CD4-positive, alpha-beta T cell (primary cell): ENCODE measurements at regions of chr1 and their contacts with region 1.

Region 1: GRCh38 chr1:11907275-11908094 is 18.7 kb downstream of the KIAA2013 start:
- DNase-seq: peak; percentile 80 to 97 (median 88)
- ATAC-seq: peak; percentile 67
- H3K4me3 ChIP-seq: peak overlapping the region; percentile 90
- H3K4me3 Mint-ChIP-seq: peak overlapping the region; percentile 91
- H3K27ac ChIP-seq: peak overlapping the region; percentile 86 to 97
- H3K27ac Mint-ChIP-seq: peak overlapping the region; percentile 100
- H3K4me1 ChIP-seq: peaks cover 36% of the 10 kb centered on the region
- H3K4me1 Mint-ChIP-seq: peaks cover 41% of the 10 kb centered on the region
- H3K27me3 ChIP-seq: peaks cover 6% of the 10 kb centered on the region in 2 experiments
- H3K27me3 Mint-ChIP-seq: peaks cover 20% of the 10 kb centered on the region
- CTCF ChIP-seq: peak; percentile 81

Region 2: DNA sequence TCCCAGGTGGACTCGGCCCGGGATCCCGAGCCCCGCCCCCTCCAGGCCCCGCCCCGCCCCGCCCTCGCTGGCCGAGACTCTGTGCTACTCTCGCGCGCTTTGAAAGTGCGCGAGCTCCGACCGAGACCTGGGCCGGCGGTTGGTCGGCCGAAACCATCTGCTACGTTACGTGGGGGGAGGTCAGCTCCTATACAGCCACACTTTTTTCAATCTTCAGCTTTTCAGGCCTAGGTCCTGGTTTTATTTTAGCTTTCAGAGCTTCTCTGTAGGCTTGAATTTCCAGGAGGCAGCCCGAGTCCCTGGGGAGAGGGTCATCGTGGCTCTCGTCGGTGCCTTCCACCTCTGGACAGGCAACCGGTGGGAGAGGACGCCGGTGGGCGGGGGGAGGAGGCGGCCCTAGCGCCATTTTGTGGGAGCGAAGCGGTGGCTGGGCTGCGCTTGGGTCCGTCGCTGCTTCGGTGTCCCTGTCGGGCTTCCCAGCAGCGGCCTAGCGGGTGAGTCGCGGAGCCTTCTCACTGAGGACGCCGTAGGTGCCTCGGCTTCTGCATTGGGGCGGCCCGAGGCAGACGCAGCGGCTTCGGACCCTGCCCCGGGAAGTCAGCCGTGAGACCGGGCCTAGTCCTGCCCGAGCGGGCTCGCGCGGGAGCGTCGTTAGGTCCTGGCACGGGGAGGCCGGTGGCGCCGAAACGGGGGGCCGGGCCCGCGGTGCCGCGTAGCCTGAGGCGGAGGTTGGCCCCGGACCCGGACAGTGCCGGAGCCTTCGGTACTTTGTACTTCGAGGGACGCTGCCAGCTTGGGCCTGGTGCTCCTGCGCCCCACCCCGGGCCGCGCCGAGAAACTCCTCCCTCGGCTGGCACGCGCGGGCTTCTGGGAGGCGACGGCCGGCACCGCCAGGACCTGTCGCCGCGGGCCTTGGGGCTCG is 895.0 kb before region 1 on chr1 and contains the start of gene TARDBP:
- CTCF ChIA-PET with region 1: no interaction called
- POLR2A ChIA-PET with region 1: interaction called, 26 read pairs
- intact Hi-C with region 1: no loop called
- DNase-seq: peak; percentile 80 to 95 (median 88)
- ATAC-seq: peak; percentile 85
- H3K4me3 ChIP-seq: peak within 1 kb of the TSS; percentile 85
- H3K4me3 Mint-ChIP-seq: peak within 1 kb of the TSS; percentile 94
- H3K27ac ChIP-seq: peak within 1 kb of the TSS; percentile 91 to 99
- H3K27ac Mint-ChIP-seq: peak within 1 kb of the TSS; percentile 98
- H3K4me1 ChIP-seq: peaks cover 44% of the 10 kb centered on the region
- H3K4me1 Mint-ChIP-seq: peaks cover 34% of the 10 kb centered on the region
- H3K27me3 ChIP-seq: no peaks in the 10 kb centered on the region
- H3K27me3 Mint-ChIP-seq: no peaks in the 10 kb centered on the region
- CTCF ChIP-seq: no peak
- total RNA-seq, gene TARDBP: 141 to 149 TPM

Region 3: GRCh38 chr1:11661103-11661502 is 246.4 kb before region 1 on chr1:
- CTCF ChIA-PET with region 1: no interaction called
- POLR2A ChIA-PET with region 1: interaction called, 16 read pairs
- intact Hi-C with region 1: no loop called
- DNase-seq: no peak
- ATAC-seq: no peak
- H3K4me3 ChIP-seq: no peak overlapping the region
- H3K4me3 Mint-ChIP-seq: peak overlapping the region; percentile 11
- H3K27ac ChIP-seq: no peak overlapping the region
- H3K27ac Mint-ChIP-seq: no peak overlapping the region
- H3K4me1 ChIP-seq: peaks cover 20% of the 10 kb centered on the region
- H3K4me1 Mint-ChIP-seq: peaks cover under 1% of the 10 kb centered on the region
- H3K27me3 ChIP-seq: no peaks in the 10 kb centered on the region
- H3K27me3 Mint-ChIP-seq: no peaks in the 10 kb centered on the region
- CTCF ChIP-seq: no peak

Region 4: DNA sequence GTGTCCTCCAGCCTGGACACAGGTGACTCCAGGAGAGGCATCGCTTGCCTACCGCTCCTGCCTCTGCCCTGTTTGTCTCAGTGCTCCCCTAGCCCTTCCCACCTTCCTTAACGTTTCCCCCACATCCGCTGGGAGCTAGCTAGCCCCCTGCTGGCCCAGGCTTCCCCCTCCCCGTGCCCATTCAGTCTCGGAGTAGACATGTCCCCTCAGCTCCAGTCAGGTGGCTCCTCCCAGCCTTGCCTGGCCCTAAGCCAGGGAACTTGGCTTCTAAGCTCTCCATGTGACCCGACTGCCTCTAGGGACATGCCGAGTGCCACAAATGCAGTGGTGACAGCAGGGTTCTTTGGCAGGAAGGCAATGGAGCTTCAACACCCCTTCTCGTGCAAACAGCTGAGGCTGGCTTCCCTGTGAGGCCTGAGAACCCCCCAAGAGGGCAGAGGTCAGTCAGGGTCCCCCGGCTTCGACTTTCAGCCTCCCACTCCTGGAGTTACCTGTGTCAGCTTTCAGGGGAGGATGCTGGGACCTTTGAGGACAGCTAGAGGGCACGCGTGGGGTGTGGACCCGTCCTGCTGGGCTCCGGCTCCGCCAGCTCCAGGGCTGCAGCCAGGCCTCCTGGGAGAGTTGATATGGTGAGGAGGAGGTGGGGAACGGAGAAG is 199.7 kb before region 1 on chr1:
- CTCF ChIA-PET with region 1: no interaction called
- POLR2A ChIA-PET with region 1: no interaction called
- intact Hi-C with region 1: no loop called
- DNase-seq: no peak
- ATAC-seq: no peak
- H3K4me3 ChIP-seq: no peak overlapping the region
- H3K4me3 Mint-ChIP-seq: no peak overlapping the region
- H3K27ac ChIP-seq: no peak overlapping the region
- H3K27ac Mint-ChIP-seq: no peak overlapping the region
- H3K4me1 ChIP-seq: no peaks in the 10 kb centered on the region
- H3K4me1 Mint-ChIP-seq: no peaks in the 10 kb centered on the region
- H3K27me3 ChIP-seq: peaks cover 2 to 16% of the 10 kb centered on the region in 2 experiments
- H3K27me3 Mint-ChIP-seq: peaks cover 13% of the 10 kb centered on the region
- CTCF ChIP-seq: no peak

Region 5: DNA sequence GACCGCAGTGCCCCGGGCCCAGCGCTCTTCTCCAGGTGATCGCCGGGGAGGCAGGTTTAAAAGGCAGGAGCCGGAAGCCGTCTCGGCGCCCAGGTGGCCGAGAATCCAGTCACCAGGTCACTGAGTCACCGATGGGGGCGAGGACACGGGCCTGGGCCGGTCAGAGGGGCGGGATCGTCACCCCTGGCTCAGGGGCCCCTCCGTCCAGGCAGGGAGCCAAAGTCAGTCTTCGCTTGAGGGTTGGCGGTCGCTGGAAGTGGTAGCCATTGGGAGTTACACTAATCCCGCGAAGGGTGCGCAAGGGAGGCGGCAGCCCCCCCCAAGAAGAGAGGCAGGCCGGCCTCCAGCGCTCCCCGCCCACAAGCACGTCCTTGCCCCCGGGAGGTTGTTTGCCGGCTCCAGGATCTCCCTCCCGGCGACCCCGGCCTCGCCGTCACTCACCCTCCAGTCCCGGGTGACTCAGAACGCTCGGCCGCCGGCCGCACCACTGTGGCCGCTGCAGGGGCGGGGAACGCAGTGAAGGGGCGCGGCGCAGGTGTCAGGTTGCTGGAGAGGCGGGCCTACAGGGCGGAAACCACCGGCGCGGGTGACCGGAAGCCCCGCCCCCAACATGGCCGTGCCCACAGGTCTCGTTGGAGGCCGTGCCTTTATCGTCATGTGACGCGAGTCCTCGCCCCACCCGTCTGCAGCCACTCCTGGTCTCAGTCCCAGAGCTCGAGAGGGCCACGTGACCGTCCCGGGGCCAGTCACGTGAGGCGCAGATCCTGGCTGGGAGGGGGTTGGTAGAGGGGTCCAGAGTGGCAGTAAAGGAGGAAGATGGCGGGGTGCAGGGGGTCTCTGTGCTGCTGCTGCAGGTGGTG is 101.8 kb before region 1 on chr1 and contains the starts of genes CLCN6 and MTHFR:
- CTCF ChIA-PET with region 1: interaction called, 13 read pairs
- POLR2A ChIA-PET with region 1: interaction called, 84 read pairs
- intact Hi-C with region 1: loop called in 1 of 2 experiments (anchors 2 kb)
- DNase-seq: peak; percentile 93 to 99 (median 97)
- ATAC-seq: peak; percentile 85
- H3K4me3 ChIP-seq: peak within 1 kb of the TSS; percentile 98
- H3K4me3 Mint-ChIP-seq: peak within 1 kb of the TSS; percentile 99
- H3K27ac ChIP-seq: peak within 1 kb of the TSS; percentile 86 to 92
- H3K27ac Mint-ChIP-seq: peak within 1 kb of the TSS; percentile 91
- H3K4me1 ChIP-seq: peaks cover 58% of the 10 kb centered on the region
- H3K4me1 Mint-ChIP-seq: peaks cover 66% of the 10 kb centered on the region
- H3K27me3 ChIP-seq: no peaks in the 10 kb centered on the region
- H3K27me3 Mint-ChIP-seq: no peaks in the 10 kb centered on the region
- CTCF ChIP-seq: no peak
- total RNA-seq, gene CLCN6: 10.9 to 11.2 TPM
- total RNA-seq, gene MTHFR: 30.8 to 31.3 TPM

Region 6: DNA sequence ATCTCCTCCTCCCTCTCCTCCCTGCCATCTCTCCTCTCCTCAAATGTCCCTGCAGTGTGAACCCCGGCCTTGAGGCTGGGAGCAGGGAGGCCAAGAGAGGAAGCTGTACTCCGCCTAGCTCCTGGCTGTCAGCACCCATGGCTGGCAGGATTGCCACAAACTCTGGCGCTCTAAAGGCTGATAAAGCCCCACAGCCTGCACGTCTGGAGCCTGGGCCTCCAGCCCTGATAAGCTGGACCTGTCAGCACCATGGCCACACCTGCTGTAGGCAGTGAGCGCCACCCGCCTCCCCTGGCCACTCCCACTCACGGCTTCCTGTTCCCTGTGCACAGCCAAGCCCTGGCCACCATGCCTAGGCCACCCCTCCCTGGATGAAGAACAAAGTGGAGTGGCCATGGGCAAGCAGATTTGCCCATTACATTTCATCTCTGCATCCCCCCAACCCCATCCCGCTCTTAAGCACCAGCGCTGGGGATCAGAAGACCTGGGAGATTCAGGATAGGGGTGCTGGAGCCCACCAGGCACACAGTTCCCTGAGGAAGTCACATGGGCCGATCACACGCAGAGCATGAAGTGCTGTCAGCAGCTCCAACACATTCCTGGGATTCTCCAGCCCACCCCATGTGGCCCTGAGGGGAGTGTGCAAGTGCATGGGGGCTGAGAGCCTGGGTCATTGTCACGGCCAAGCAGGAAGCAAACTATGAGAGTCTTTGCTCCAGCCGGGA is 24.5 kb before region 1 on chr1:
- CTCF ChIA-PET with region 1: interaction called, 4 read pairs
- POLR2A ChIA-PET with region 1: interaction called, 10 read pairs
- intact Hi-C with region 1: no loop called
- DNase-seq: no peak
- ATAC-seq: no peak
- H3K4me3 ChIP-seq: no peak overlapping the region
- H3K4me3 Mint-ChIP-seq: no peak overlapping the region
- H3K27ac ChIP-seq: no peak overlapping the region
- H3K27ac Mint-ChIP-seq: no peak overlapping the region
- H3K4me1 ChIP-seq: no peaks in the 10 kb centered on the region
- H3K4me1 Mint-ChIP-seq: no peaks in the 10 kb centered on the region
- H3K27me3 ChIP-seq: peaks cover 0 to 2% of the 10 kb centered on the region in 2 experiments
- H3K27me3 Mint-ChIP-seq: no peaks in the 10 kb centered on the region
- CTCF ChIP-seq: no peak

Region 7: DNA sequence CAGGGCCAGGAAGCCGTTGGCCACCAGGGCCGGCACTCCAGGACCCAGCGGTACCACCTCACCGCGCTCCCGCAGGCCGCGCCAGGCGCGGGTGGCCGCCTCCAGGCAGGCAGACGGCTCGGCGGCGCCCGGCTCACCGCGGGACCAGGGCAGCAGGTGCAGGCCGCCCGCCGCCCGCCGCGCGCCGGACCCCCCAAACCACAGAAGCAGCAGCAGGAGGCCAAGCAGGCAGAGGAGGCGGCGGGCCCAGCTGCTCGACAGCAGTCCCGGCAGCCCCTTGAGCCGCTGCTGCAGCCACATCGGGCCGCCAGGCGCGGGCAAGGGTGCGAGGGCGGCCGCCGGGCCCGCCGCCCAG is 18.4 kb after region 1 on chr1:
- CTCF ChIA-PET with region 1: no interaction called
- POLR2A ChIA-PET with region 1: interaction called, 69 read pairs
- intact Hi-C with region 1: loop called in 1 of 2 experiments (anchors 2 kb)
- DNase-seq: peak in 2 of 14 experiments; percentile 12
- ATAC-seq: peak; percentile 18
- H3K4me3 ChIP-seq: peak overlapping the region; percentile 48
- H3K4me3 Mint-ChIP-seq: no peak overlapping the region
- H3K27ac ChIP-seq: no peak overlapping the region
- H3K27ac Mint-ChIP-seq: peak overlapping the region; percentile 61
- H3K4me1 ChIP-seq: peaks cover 43% of the 10 kb centered on the region
- H3K4me1 Mint-ChIP-seq: peaks cover 29% of the 10 kb centered on the region
- H3K27me3 ChIP-seq: no peaks in the 10 kb centered on the region
- H3K27me3 Mint-ChIP-seq: no peaks in the 10 kb centered on the region
- CTCF ChIP-seq: no peak

Region 8: DNA sequence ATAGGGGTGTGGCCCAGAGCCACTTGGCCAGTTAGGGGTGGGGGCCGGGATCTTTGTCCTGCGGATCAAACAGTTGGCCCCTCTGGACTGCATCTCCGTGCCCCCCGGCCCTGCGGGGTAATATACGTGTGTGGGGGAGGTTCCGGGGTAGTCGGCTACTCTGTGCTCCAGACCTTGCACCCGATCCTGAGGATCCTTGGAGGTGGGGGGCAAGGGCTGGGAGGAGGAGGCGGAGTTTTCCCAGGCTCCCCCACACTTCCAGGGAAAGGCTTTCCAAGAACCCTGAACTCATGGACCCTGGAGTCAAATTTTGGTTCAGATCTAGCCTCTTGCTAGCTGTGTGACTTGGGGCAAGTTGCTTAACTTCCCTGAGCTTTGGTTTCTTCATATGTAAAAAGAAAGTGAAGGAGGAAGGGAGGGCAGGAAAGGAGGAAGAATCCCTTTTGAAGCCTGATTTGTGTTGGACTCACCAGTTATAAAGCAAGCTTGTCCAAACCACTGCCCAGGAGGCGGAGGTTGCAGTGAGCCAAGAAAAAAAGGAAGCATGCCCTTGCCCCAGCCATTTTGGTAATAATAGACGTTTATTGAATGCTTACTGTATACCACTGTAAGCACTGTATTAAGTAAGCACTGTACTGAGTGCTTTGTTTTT is 112.5 kb after region 1 on chr1:
- CTCF ChIA-PET with region 1: interaction called, 3 read pairs
- POLR2A ChIA-PET with region 1: interaction called, 55 read pairs
- intact Hi-C with region 1: loop called in 1 of 2 experiments (anchors 2 kb)
- DNase-seq: peak in 2 of 14 experiments; percentile 36 to 40
- ATAC-seq: no peak
- H3K4me3 ChIP-seq: peak overlapping the region; percentile 81
- H3K4me3 Mint-ChIP-seq: peak overlapping the region; percentile 87
- H3K27ac ChIP-seq: peak overlapping the region in 1 of 2 donors; percentile 17
- H3K27ac Mint-ChIP-seq: peak overlapping the region; percentile 77
- H3K4me1 ChIP-seq: peaks cover 19% of the 10 kb centered on the region
- H3K4me1 Mint-ChIP-seq: peaks cover 12% of the 10 kb centered on the region
- H3K27me3 ChIP-seq: no peaks in the 10 kb centered on the region
- H3K27me3 Mint-ChIP-seq: no peaks in the 10 kb centered on the region
- CTCF ChIP-seq: no peak